Ascending aorta (tissue), 2 donors: ENCODE measurements at regions of chr6 and their contacts with region 1.

Region 1: GRCh38 chr6:13091192-13091591 is 237.1 kb downstream of the TBC1D7 start:
- DNase-seq: peak in 1 of 2 donors; percentile 81
- H3K4me3 ChIP-seq: no peak overlapping the region
- H3K27ac ChIP-seq: peak overlapping the region; percentile 50 to 54
- H3K4me1 ChIP-seq: peaks cover 2 to 17% of the 10 kb centered on the region in 2 donors
- H3K27me3 ChIP-seq: no peaks in the 10 kb centered on the region
- CTCF ChIP-seq: no peak

Region 2: GRCh38 chr6:13026557-13026956 is 64.6 kb before region 1 on chr6:
- intact Hi-C with region 1: loop called (anchors 5 kb)
- DNase-seq: no peak
- H3K4me3 ChIP-seq: peak overlapping the region; percentile 7 to 45
- H3K27ac ChIP-seq: peak overlapping the region; percentile 58 to 71
- H3K4me1 ChIP-seq: peaks cover 0 to 26% of the 10 kb centered on the region in 2 donors
- H3K27me3 ChIP-seq: no peaks in the 10 kb centered on the region
- CTCF ChIP-seq: peak in 1 of 3 experiments; percentile 12